BJ (cell line): ENCODE measurements at regions of chr9 and their contacts with region 1.

Region 1: GRCh38 chr9:70484210-70485130 is 70.0 kb upstream of the KLF9 start:
- DNase-seq: no peak
- H3K4me3 ChIP-seq: no peak overlapping the region
- H3K27me3 ChIP-seq: no peaks in the 10 kb centered on the region
- CTCF ChIP-seq: peak; percentile 80

Region 2: GRCh38 chr9:70411930-70412831 is 72.3 kb before region 1 on chr9:
- CTCF ChIA-PET with region 1: interaction called, 12 read pairs
- POLR2A ChIA-PET with region 1: interaction called, 3 read pairs
- DNase-seq: no peak
- H3K4me3 ChIP-seq: peak overlapping the region; percentile 90
- H3K27me3 ChIP-seq: no peaks in the 10 kb centered on the region
- CTCF ChIP-seq: no peak

Region 3: GRCh38 chr9:70498866-70499265 is 14.4 kb after region 1 on chr9:
- CTCF ChIA-PET with region 1: interaction called, 11 read pairs
- POLR2A ChIA-PET with region 1: no interaction called
- DNase-seq: no peak
- H3K4me3 ChIP-seq: no peak overlapping the region
- H3K27me3 ChIP-seq: peaks cover 2% of the 10 kb centered on the region
- CTCF ChIP-seq: no peak